ENCODE measurements at regions of chr18 and their contacts with region 1.

Region 1: GRCh38 chr18:79427368-79428225 is 31.9 kb downstream of the NFATC1 start:
- DNase-seq: no peak
- H3K4me3 ChIP-seq: no peak overlapping the region
- H3K27ac ChIP-seq: no peak overlapping the region
- H3K4me1 ChIP-seq: no peaks in the 10 kb centered on the region
- H3K27me3 ChIP-seq: peaks cover 1% of the 10 kb centered on the region; the same call in 1 of the 2 replicates
- CTCF ChIP-seq: no peak

Region 2: GRCh38 chr18:79077181-79077580 is 350.4 kb before region 1 on chr18:
- CTCF ChIA-PET with region 1: no interaction called
- POLR2A ChIA-PET with region 1: no interaction called
- intact Hi-C with region 1: no loop called
- DNase-seq: no peak
- H3K4me3 ChIP-seq: no peak overlapping the region
- H3K27ac ChIP-seq: no peak overlapping the region
- H3K4me1 ChIP-seq: no peaks in the 10 kb centered on the region
- H3K27me3 ChIP-seq: no peaks in the 10 kb centered on the region
- CTCF ChIP-seq: no peak

Region 3: GRCh38 chr18:79458131-79458838 is 30.7 kb after region 1 on chr18:
- CTCF ChIA-PET with region 1: no interaction called
- POLR2A ChIA-PET with region 1: no interaction called
- intact Hi-C with region 1: no loop called
- DNase-seq: peak; percentile 40 to 41
- H3K4me3 ChIP-seq: no peak overlapping the region
- H3K27ac ChIP-seq: no peak overlapping the region
- H3K4me1 ChIP-seq: peaks cover 5% of the 10 kb centered on the region; the same call in 1 of the 2 replicates
- H3K27me3 ChIP-seq: 0 out of 2 replicates have a peak, but pooled peaks cover 5% of the 10 kb centered on the region
- CTCF ChIP-seq: no peak

Region 4: DNA sequence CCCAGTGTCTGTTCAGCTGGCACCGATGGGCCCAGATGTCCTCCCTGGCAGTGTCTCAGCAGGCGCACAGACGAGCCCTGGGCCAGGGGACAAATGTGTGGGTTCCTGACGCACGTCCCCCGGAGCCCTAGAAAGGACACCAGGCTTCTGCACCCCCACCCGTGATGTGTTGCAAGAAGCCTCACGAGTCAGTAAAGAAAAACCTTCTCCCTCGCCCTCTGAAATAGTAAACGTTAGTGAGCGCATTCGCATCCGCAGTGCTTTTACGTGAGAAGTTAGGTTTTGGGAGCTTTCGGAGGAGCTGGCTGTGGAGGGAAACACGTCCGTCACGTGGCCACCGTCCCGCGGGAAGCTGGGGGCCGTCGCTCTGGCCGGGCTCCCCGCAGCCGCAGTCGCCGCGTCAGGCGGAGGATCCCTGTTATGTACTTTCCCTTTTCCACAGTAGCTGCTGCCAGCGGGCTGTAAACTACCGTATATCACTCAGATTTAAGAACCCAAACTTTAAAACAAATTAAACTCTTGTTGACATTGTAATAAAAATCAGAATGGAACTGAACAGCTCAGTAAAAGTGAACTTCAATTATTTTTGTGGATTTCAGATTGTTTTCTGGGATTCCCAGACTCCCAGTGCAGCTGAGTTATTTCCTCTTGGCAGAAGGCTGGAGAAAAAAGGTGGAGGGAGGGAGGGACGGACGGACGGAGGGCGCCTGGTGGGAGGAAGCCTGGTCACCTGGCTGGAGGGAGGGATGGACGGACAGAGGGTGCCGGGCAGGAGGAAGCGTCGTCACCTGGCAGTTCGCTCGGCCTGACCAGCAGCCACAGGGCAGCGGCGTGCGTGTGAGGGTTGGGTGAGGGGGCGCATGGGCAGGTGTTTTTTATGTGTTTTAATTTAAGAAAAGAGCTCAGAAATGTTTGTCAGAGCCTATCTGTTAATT is 80.2 kb after region 1 on chr18:
- CTCF ChIA-PET with region 1: no interaction called
- POLR2A ChIA-PET with region 1: interaction called, 11 read pairs
- intact Hi-C with region 1: no loop called
- DNase-seq: peak in 1 of 2 experiments; percentile 24
- H3K4me3 ChIP-seq: no peak overlapping the region
- H3K27ac ChIP-seq: no peak overlapping the region
- H3K4me1 ChIP-seq: no peaks in the 10 kb centered on the region
- H3K27me3 ChIP-seq: peaks cover 59% of the 10 kb centered on the region
- CTCF ChIP-seq: no peak

Region 5: GRCh38 chr18:79679111-79679872 is 251.7 kb after region 1 on chr18 and contains the start of gene CTDP1:
- CTCF ChIA-PET with region 1: no interaction called
- POLR2A ChIA-PET with region 1: no interaction called
- intact Hi-C with region 1: no loop called
- DNase-seq: peak; percentile 95
- H3K4me3 ChIP-seq: peak within 1 kb of the TSS; percentile 63
- H3K27ac ChIP-seq: peak within 1 kb of the TSS; percentile 83
- H3K4me1 ChIP-seq: peaks cover 22% of the 10 kb centered on the region
- H3K27me3 ChIP-seq: no peaks in the 10 kb centered on the region
- CTCF ChIP-seq: no peak
- total RNA-seq, gene CTDP1: 16.0 and 18.6 TPM in 2 replicates

Region 6: DNA sequence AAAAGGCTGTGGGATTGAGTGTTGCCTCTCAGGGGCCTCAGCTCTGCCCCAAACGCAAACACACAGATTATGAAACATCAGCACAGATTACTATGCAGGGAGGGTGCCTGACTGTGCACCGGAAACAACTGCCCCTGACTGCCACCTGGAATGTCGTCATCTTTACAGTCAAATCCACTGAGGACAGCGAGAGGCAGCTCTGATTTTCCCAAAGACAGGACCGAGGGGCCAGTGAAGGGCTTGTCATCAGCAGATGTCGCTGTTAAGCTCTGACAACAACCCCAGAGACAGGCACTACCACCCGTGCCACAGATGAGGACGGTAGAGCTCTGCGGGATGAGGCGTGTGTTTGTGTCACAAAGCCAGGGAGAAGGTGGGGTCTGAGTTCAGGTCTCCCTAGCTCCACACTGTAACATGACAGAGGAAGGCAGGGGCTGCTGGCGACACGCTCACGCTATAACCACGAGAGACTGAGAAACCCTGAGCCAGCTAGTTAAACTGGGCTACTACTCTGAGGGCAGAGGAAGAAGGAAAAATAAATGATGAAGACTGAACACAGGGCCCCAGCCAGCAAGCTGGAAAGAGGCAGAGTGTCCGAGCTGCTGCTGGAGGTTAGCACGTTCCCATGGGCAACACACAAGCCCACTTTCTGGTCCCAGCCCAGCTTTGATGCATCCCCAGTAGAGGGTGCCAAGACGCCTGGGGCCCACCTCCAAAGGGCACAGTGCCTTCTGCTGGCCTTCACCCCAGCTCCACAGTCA is 772.8 kb after region 1 on chr18:
- CTCF ChIA-PET with region 1: interaction called, 24 read pairs
- POLR2A ChIA-PET with region 1: no interaction called
- intact Hi-C with region 1: no loop called
- DNase-seq: no peak
- H3K4me3 ChIP-seq: no peak overlapping the region
- H3K27ac ChIP-seq: no peak overlapping the region
- H3K4me1 ChIP-seq: no peaks in the 10 kb centered on the region
- H3K27me3 ChIP-seq: peaks cover 49% of the 10 kb centered on the region
- CTCF ChIP-seq: no peak; the same call in 1 of the 2 replicates